CD4-positive, alpha-beta memory T cell (primary cell): ENCODE measurements at regions of chr5 and their contacts with region 1.

Region 1: DNA sequence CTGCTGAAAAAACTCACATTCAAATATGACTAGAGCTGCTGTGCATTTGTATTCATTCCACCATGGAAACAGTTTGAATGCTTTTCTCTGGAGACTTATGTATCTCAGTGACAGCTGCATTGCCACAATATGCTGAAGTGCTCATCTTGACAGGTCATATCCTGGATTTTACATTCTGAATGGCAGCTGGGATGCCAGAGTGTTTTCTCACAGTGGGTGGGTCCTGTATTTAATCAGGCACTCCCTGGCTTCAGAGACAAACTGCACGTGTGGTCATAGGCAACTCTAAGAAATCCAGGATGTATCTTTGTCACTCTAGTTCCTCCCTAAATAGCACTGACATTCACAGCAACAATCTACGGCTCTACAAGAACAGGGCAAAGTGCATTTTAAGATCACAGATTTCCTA is 75.6 kb downstream of the ST8SIA4 start:
- DNase-seq: no peak
- H3K4me3 ChIP-seq: no peak overlapping the region
- H3K4me3 Mint-ChIP-seq: peak overlapping the region in 1 of 8 donors; percentile 44
- H3K27ac ChIP-seq: no peak overlapping the region
- H3K27ac Mint-ChIP-seq: peak overlapping the region in 5 of 7 donors; percentile 16 to 82 (median 24)
- H3K4me1 ChIP-seq: peaks cover 20% of the 10 kb centered on the region
- H3K4me1 Mint-ChIP-seq: peaks cover 28 to 33% (median 31%) of the 10 kb centered on the region in 4 donors
- H3K27me3 ChIP-seq: no peaks in the 10 kb centered on the region
- H3K27me3 Mint-ChIP-seq: no peaks in the 10 kb centered on the region

Region 2: DNA sequence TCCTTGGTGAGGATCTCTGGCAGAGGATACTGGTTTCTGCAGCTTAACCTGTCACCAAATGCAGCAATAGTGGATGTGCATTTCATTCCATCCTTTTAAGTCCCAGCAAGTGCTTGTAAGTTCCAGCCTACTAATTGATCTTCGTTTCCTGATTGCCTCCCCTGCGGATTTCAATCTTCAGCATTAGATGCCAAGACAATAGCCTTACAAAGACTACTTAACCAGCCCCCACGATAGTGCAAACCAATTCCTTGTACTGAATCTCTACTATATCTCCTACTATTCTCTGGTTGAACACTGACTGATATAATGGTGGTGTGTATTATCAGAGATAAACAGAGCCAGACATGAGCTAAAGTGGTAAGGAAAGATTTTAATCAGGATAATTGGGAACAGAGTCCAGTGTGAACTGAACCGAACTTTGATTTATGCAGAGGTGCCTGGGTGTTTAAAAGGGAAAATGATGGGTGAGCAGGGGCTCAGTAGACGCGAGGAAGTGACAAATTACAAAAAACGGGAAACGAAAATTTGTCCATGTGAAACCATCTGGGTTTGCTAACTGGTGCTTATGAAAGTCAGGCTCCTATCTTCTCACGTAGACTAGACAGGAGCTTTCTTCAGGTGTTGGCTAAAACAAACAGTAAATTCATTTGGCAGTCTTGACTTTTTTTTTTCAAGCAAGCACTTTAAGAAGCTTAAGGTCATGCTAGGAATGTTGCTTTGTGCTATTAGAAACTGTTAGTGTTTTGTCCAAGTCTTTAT is 182.5 kb after region 1 on chr5:
- CTCF ChIA-PET with region 1: no interaction called
- POLR2A ChIA-PET with region 1: no interaction called
- intact Hi-C with region 1: loop called (anchors 10 kb)
- DNase-seq: no peak
- H3K4me3 ChIP-seq: no peak overlapping the region
- H3K4me3 Mint-ChIP-seq: no peak overlapping the region
- H3K27ac ChIP-seq: no peak overlapping the region
- H3K27ac Mint-ChIP-seq: no peak overlapping the region
- H3K4me1 ChIP-seq: no peaks in the 10 kb centered on the region
- H3K4me1 Mint-ChIP-seq: peaks cover 0 to 3% (median under 1%) of the 10 kb centered on the region in 4 donors
- H3K27me3 ChIP-seq: no peaks in the 10 kb centered on the region
- H3K27me3 Mint-ChIP-seq: no peaks in the 10 kb centered on the region

Region 3: GRCh38 chr5:101385276-101385675 is 557.8 kb after region 1 on chr5:
- CTCF ChIA-PET with region 1: no interaction called
- POLR2A ChIA-PET with region 1: no interaction called
- intact Hi-C with region 1: no loop called
- DNase-seq: no peak
- H3K4me3 ChIP-seq: no peak overlapping the region
- H3K4me3 Mint-ChIP-seq: no peak overlapping the region
- H3K27ac ChIP-seq: no peak overlapping the region
- H3K27ac Mint-ChIP-seq: no peak overlapping the region
- H3K4me1 ChIP-seq: no peaks in the 10 kb centered on the region
- H3K4me1 Mint-ChIP-seq: no peaks in the 10 kb centered on the region
- H3K27me3 ChIP-seq: no peaks in the 10 kb centered on the region
- H3K27me3 Mint-ChIP-seq: peaks cover 0 to 3% of the 10 kb centered on the region in 2 donors